Cardiac septum (tissue), 1 donor: ENCODE measurements at regions of chr19 and their contacts with region 1.

Region 1: GRCh38 chr19:58543826-58544590 is at the start of gene TRIM28:
- DNase-seq: peak; percentile 99
- total RNA-seq, gene TRIM28: 140 TPM

Region 2: GRCh38 chr19:58499021-58499927 is 44.7 kb before region 1 on chr19:
- intact Hi-C with region 1: loop called (anchors 1 kb)
- DNase-seq: peak; percentile 99

Region 3: GRCh38 chr19:58558623-58559274 is 14.7 kb after region 1 on chr19:
- intact Hi-C with region 1: no loop called
- DNase-seq: peak; percentile 100